ENCODE measurements at regions of chr17 and their contacts with region 1.

Region 1: GRCh38 chr17:36655726-36656125 is 54.3 kb downstream of the MRM1 start:
- DNase-seq: no peak
- H3K4me3 ChIP-seq: no peak overlapping the region
- H3K27ac ChIP-seq: no peak overlapping the region
- H3K27me3 ChIP-seq: peaks cover 77% of the 10 kb centered on the region
- CTCF ChIP-seq: no peak

Region 2: DNA sequence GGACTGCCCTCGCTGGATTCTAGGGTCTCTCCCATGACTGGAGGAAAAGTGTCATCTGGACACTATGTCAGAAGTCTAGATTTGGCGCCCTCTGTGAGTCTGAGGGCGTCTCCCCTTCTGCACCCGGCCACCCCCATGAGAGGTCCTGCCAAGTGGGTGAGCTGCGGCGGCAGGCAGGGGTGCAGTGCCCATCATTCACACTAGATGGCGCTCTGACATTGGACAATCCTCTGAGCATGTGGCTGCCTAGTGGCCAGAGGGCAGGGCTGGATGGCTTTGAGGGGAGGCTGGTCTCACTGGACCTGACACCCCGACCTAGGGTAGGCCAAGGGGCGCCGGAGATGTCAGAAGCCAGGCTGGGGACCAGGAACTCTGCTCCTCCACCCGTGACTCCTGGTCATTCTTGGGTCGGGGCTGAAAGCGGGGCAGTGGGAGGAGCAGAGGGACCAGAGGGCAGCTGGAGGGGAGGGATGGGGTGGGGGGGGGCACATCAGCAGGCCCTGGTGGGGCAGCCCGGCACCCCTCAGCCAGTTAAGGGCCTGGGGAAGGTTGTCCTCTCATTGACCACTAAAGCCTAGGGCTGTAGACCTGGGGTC is 26.4 kb before region 1 on chr17:
- CTCF ChIA-PET with region 1: interaction called, 13 read pairs
- POLR2A ChIA-PET with region 1: no interaction called
- DNase-seq: peak; percentile 33
- H3K4me3 ChIP-seq: no peak overlapping the region
- H3K27ac ChIP-seq: no peak overlapping the region
- H3K27me3 ChIP-seq: peaks cover 31% of the 10 kb centered on the region
- CTCF ChIP-seq: peak; percentile 98

Measured in AG04450 (cell line).